ENCODE measurements at regions of chr1 and their contacts with region 1.

Region 1: DNA sequence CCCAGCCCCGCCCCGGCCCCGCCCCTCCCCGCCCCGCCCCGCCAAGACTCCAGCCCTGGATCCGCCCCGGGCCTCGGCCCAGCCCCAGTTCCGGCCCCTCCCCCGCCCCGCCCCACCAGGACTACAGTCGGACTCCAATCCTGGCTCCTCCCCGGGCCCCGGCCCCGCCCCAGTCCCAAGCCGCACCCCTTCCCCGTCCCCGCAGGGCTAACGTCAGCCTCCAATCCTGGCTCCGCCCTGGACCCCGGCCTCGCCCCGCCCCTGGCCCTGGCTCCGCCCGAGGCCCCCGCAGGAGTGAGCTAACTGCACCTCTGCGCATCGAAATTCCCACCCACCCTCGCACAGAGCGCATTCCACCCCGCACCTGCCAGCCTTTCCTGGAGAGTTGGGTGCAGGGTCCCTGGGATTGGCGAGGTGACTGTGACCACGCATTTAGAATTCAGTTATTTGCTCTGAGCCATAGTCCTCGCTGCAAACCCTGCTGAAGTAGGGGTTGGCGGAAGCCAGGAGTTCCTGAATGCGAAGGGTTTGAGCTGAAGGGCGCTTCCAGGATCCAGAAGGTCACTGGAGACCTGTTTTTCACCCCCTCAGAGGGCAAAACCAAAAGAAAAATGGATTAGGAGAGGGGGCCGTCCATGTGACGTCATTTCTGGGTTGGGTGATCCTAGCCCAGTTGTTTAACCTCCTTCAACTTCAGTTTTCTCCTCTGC is 588 bp upstream of the IGSF8 start:
- DNase-seq: peak; percentile 55
- ATAC-seq: peak; percentile 85
- H3K4me3 ChIP-seq: peak overlapping the region; percentile 82
- H3K27ac ChIP-seq: peak overlapping the region; percentile 54; the same call in 1 of the 2 replicates
- H3K4me1 ChIP-seq: peaks cover 25% of the 10 kb centered on the region
- H3K27me3 ChIP-seq: no peaks in the 10 kb centered on the region
- CTCF ChIP-seq: no peak
- EP300 ChIP-seq: no peak
- POLR2A ChIP-seq: no peak
- RAD21 ChIP-seq: no peak

Region 2: GRCh38 chr1:159989581-159989980 is 109.4 kb before region 1 on chr1:
- CTCF ChIA-PET with region 1: no interaction called
- POLR2A ChIA-PET with region 1: no interaction called
- RAD21 ChIA-PET with region 1: no interaction called
- SMC1A ChIA-PET with region 1: no interaction called
- in situ Hi-C with region 1: no loop called
- intact Hi-C with region 1: no loop called
- DNase-seq: no peak
- ATAC-seq: no peak
- H3K4me3 ChIP-seq: no peak overlapping the region
- H3K27ac ChIP-seq: no peak overlapping the region
- H3K4me1 ChIP-seq: no peaks in the 10 kb centered on the region
- H3K27me3 ChIP-seq: peaks cover 0 to 2% of the 10 kb centered on the region in 2 experiments; a peak in 1 of 4 replicates
- CTCF ChIP-seq: no peak
- EP300 ChIP-seq: no peak
- POLR2A ChIP-seq: no peak
- RAD21 ChIP-seq: no peak

Region 3: DNA sequence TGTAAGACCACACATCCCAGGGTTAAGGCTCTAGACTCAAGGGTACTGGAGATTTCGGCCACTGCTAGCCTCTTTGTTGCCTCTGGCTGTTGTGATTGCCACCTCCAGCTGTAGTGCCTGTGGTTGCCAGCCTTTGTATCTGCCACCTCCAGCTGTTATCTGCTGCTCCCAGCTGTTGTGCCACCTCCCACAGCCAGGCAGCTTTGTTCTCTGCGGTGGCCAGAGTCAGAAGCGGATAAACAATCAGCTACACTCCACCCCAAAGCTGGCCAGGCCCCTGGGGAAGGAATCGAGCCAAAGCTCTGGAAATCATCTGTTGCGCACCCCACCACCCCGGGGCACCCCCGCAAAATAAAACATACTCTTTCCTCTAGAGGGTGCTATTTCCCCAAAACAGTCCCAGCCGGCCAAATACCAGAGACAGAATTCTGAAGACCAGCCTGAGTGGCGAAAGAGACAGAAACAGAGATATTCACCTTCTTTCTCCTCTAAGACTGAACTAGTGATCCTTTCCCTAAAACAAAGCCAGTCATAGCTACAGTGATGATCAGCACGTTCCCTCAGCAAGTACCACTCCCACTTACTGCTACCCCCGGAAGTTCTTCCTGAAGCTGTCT is 52.4 kb before region 1 on chr1:
- CTCF ChIA-PET with region 1: interaction called, 1,035 read pairs
- POLR2A ChIA-PET with region 1: no interaction called
- RAD21 ChIA-PET with region 1: interaction called, 3 read pairs
- SMC1A ChIA-PET with region 1: no interaction called
- in situ Hi-C with region 1: no loop called
- intact Hi-C with region 1: no loop called
- DNase-seq: no peak
- ATAC-seq: peak; percentile 96
- H3K4me3 ChIP-seq: 0 out of 2 replicates have a peak overlapping the region, but pooled peaks have one; percentile 16
- H3K27ac ChIP-seq: no peak overlapping the region
- H3K4me1 ChIP-seq: peaks cover 11% of the 10 kb centered on the region
- H3K27me3 ChIP-seq: no peaks in the 10 kb centered on the region; a peak in 3 of 4 replicates
- CTCF ChIP-seq: peak; percentile 54 to 65 (median 61)
- EP300 ChIP-seq: no peak
- POLR2A ChIP-seq: no peak
- RAD21 ChIP-seq: peak; percentile 78

Region 4: DNA sequence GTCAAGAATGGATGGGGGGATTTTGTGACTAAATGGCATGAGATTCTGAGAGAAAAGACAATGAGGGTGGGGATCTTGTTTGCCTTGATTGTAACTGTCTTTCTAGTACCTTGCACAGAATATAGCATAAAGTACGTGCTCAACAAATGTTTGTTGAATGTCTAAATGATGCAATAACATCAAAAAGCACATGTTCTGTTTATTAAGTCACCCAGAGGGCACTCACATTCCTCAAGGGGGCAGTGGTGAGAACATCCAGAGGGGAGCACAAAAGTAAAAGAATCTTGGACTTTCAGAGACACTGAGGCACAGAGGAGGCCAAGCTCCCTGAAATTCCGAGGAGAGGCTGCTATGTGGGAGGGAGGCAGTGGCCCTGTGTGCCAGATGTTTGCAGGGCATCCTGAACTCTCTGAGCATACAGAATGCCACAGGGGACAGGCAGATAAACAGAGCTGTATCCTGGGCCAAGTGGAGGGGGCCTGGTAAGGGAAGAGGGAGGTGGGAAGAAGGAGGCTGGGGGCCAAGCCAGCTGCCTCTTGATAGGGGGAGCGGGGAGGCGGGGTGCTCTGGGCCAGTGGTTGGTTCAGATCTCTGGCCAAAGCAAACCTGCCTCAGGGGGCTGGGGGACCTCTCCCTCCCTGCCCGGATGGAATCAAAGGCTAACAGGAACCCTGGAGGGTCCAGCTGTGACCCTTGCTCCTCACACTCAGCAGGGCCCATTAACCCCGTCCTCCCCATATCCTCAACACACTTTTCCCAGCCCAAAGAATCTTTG is 10.1 kb after region 1 on chr1:
- CTCF ChIA-PET with region 1: interaction called, 11 read pairs
- POLR2A ChIA-PET with region 1: no interaction called
- RAD21 ChIA-PET with region 1: interaction called, 3 read pairs
- SMC1A ChIA-PET with region 1: interaction called, 4 read pairs
- in situ Hi-C with region 1: no loop called
- intact Hi-C with region 1: no loop called
- DNase-seq: no peak
- ATAC-seq: peak; percentile 70
- H3K4me3 ChIP-seq: no peak overlapping the region
- H3K27ac ChIP-seq: no peak overlapping the region
- H3K4me1 ChIP-seq: no peaks in the 10 kb centered on the region
- H3K27me3 ChIP-seq: no peaks in the 10 kb centered on the region; a peak in 1 of 4 replicates
- CTCF ChIP-seq: peak; percentile 38 to 72 (median 58)
- EP300 ChIP-seq: no peak
- POLR2A ChIP-seq: no peak
- RAD21 ChIP-seq: no peak; the same call in 1 of the 2 replicates

Region 5: GRCh38 chr1:160205242-160206035 is 106.4 kb after region 1 on chr1 and contains the start of gene PEA15:
- CTCF ChIA-PET with region 1: interaction called, 32 read pairs
- POLR2A ChIA-PET with region 1: interaction called, 5 read pairs
- RAD21 ChIA-PET with region 1: interaction called, 4 read pairs
- SMC1A ChIA-PET with region 1: interaction called, 4 read pairs
- in situ Hi-C with region 1: no loop called
- intact Hi-C with region 1: no loop called
- DNase-seq: no peak
- ATAC-seq: peak; percentile 76
- H3K4me3 ChIP-seq: peak within 1 kb of the TSS; percentile 99
- H3K27ac ChIP-seq: peak within 1 kb of the TSS; percentile 96
- H3K4me1 ChIP-seq: peaks cover 26% of the 10 kb centered on the region
- H3K27me3 ChIP-seq: no peaks in the 10 kb centered on the region
- CTCF ChIP-seq: no peak
- EP300 ChIP-seq: no peak
- POLR2A ChIP-seq: peak; percentile 66; the same call in 1 of the 2 replicates
- RAD21 ChIP-seq: no peak
- polyA plus RNA-seq, gene PEA15: 15.1 to 28.2 TPM

Region 6: GRCh38 chr1:160244209-160244608 is 145.2 kb after region 1 on chr1:
- CTCF ChIA-PET with region 1: interaction called, 189 read pairs
- POLR2A ChIA-PET with region 1: no interaction called
- RAD21 ChIA-PET with region 1: interaction called, 85 read pairs
- SMC1A ChIA-PET with region 1: interaction called, 5 read pairs
- in situ Hi-C with region 1: no loop called
- intact Hi-C with region 1: no loop called
- DNase-seq: no peak
- ATAC-seq: no peak
- H3K4me3 ChIP-seq: no peak overlapping the region
- H3K27ac ChIP-seq: no peak overlapping the region
- H3K4me1 ChIP-seq: no peaks in the 10 kb centered on the region
- H3K27me3 ChIP-seq: no peaks in the 10 kb centered on the region
- CTCF ChIP-seq: no peak
- EP300 ChIP-seq: no peak
- POLR2A ChIP-seq: no peak
- RAD21 ChIP-seq: no peak

Region 7: DNA sequence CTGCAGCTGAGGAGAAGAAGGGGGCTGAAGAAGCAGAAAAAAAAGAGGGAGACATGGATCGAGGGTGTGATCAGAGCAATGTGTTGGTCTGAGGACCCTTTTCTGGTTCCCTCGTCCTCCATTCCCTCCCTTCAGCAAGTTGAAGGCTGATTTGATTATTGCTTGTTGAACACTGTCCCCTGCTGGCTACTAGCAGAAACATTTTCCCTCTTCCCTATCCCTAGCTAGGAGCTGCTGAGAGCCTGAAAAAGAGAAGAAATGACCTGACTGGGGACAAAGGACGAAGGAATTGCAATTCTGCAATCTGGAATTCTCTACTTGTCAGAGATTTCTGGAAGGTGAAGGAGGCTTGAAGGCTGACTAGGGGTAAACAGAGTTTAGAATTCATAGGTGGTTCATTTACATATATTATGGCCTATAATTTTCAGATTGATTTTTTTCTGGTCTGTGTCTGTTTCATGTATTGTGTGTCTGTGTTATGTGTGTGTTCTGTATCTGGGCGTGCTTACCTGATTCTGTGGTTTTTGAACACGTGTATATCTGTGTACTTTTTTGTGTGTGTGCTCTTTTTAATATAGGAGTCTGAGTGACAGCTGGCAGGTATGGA is 277.6 kb after region 1 on chr1:
- CTCF ChIA-PET with region 1: interaction called, 131 read pairs
- POLR2A ChIA-PET with region 1: interaction called, 3 read pairs
- RAD21 ChIA-PET with region 1: interaction called, 43 read pairs
- SMC1A ChIA-PET with region 1: interaction called, 36 read pairs
- in situ Hi-C with region 1: loop called (anchors 5 kb)
- intact Hi-C with region 1: loop called (anchors 1 kb)
- DNase-seq: peak; percentile 36
- ATAC-seq: peak; percentile 92
- H3K4me3 ChIP-seq: no peak overlapping the region
- H3K27ac ChIP-seq: no peak overlapping the region
- H3K4me1 ChIP-seq: peaks cover 15% of the 10 kb centered on the region
- H3K27me3 ChIP-seq: no peaks in the 10 kb centered on the region
- CTCF ChIP-seq: peak; percentile 96 to 99 (median 99); a peak in 5 of 6 replicates
- EP300 ChIP-seq: no peak
- POLR2A ChIP-seq: no peak
- RAD21 ChIP-seq: peak; percentile 95